HEK293 (cell line): ENCODE measurements at regions of chr18 and their contacts with region 1.

Region 1: GRCh38 chr18:20966795-20967194 is 144.8 kb downstream of the ROCK1 start:
- H3K4me3 ChIP-seq: no peak overlapping the region
- H3K27ac ChIP-seq: no peak overlapping the region
- H3K4me1 ChIP-seq: no peaks in the 10 kb centered on the region
- CTCF ChIP-seq: no peak

Region 2: GRCh38 chr18:21179590-21180220 is 212.9 kb after region 1 on chr18:
- CTCF ChIA-PET with region 1: interaction called, 10 read pairs
- POLR2A ChIA-PET with region 1: no interaction called
- H3K4me3 ChIP-seq: no peak overlapping the region
- H3K27ac ChIP-seq: no peak overlapping the region
- H3K4me1 ChIP-seq: no peaks in the 10 kb centered on the region
- CTCF ChIP-seq: peak; percentile 68